Calu3 (cell line): ENCODE measurements at regions of chr11 and their contacts with region 1.

Region 1: GRCh38 chr11:76788661-76789439 is 5.7 kb downstream of the TSKU start:
- DNase-seq: peak; percentile 93
- H3K4me3 Mint-ChIP-seq: peak overlapping the region; percentile 56
- H3K27ac Mint-ChIP-seq: peak overlapping the region; percentile 84
- H3K4me1 Mint-ChIP-seq: peaks cover 63% of the 10 kb centered on the region
- H3K27me3 Mint-ChIP-seq: no peaks in the 10 kb centered on the region
- CTCF ChIP-seq: no peak

Region 2: GRCh38 chr11:76444384-76445123 is 344.3 kb before region 1 on chr11 and contains the start of gene EMSY:
- CTCF ChIA-PET with region 1: no interaction called
- intact Hi-C with region 1: no loop called
- DNase-seq: peak; percentile 93
- H3K4me3 Mint-ChIP-seq: peak within 1 kb of the TSS; percentile 99
- H3K27ac Mint-ChIP-seq: peak within 1 kb of the TSS; percentile 96
- H3K4me1 Mint-ChIP-seq: peaks cover 8% of the 10 kb centered on the region
- H3K27me3 Mint-ChIP-seq: no peaks in the 10 kb centered on the region
- CTCF ChIP-seq: no peak
- total RNA-seq, gene EMSY: 27.5 and 30.0 TPM in 2 replicates

Region 3: DNA sequence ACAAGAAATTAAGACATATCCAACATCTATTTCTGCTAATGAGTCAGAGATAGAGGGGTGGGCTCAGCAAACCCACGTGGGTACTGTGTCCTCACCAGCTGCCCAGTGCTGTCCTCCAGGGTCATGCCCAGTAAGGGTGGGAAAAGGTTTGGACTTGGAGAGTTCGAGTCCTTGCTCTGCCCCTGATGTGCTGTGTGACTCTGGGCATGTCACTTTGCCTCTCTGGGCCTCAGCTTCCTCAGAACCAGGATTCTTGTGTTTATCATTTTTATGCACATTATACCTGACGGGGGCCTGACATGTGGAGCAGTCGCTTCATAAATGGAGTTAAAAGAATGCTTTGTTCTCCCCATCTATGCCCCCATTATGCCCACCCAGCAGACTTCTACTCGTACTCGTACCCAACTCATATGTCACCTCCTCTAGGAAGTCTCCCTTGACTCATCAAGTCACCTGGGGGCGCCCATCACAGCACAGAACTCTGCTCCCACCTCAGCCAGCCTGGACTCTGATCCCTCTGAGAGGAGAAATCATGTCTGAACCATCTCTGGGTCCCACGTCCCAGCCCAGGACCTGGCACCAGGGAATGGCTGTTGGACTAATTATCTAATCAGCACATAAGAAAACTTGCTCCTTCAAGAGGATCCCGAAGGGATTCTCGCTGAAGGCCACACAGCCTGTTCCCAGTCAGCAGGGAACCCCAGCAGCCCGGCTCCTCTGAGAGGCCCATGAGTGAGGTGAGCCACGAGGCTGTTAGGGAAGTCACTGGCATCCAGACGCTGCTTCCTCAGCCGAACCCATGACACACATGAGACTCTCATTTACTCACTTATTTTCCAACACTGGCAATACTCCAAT is 44.4 kb before region 1 on chr11:
- CTCF ChIA-PET with region 1: interaction called, 3 read pairs
- intact Hi-C with region 1: loop called (anchors 5 kb)
- DNase-seq: no peak
- H3K4me3 Mint-ChIP-seq: no peak overlapping the region
- H3K27ac Mint-ChIP-seq: no peak overlapping the region
- H3K4me1 Mint-ChIP-seq: peaks cover 9% of the 10 kb centered on the region
- H3K27me3 Mint-ChIP-seq: no peaks in the 10 kb centered on the region
- CTCF ChIP-seq: no peak